ENCODE measurements at regions of chr5 and their contacts with region 1.

Region 1: DNA sequence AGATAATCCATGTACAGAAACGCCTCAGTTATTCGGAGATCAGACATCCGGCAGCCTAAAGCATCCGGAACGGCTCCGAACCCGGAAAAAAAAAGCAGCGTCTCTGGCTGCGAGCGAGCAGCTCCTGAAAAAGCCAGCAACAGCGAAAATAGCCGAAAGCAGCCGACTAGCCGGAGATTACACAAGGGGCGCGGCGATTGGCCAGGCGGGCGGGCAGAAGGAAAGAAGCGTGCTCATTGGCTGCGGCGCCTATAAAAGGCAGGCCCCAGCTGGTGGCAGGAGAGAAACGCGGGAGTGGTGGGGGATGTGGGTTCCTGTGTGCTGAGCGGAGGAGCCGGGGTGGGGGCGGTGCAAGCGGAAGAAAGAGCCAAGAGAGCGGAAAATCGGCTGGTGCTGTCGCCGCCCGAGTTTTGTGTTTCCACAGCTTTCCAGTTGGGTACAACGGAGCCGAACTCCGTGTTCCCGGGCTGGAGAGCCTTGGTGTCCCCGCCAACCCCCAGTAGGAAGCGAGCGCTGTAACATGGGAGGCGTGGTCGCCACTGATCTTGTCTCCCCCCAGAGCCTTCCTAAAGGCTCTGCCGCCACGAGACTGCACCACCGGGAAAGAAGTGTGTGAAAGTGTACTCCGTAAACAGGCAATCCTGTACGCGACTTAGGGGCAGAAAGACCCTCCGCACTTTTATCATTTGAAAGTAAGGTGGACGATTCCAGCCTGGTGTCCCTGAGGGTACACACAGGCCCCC is at the start of gene ARL15:
- DNase-seq: peak; percentile 95 to 99 (median 98)
- ATAC-seq: peak; percentile 96
- H3K4me3 ChIP-seq: peak within 1 kb of the TSS; percentile 96
- H3K4me3 Mint-ChIP-seq: peak within 1 kb of the TSS; percentile 85 to 98 (median 94)
- H3K27ac ChIP-seq: peak within 1 kb of the TSS; percentile 78
- H3K27ac Mint-ChIP-seq: peak within 1 kb of the TSS; percentile 84 to 98 (median 95)
- H3K4me1 ChIP-seq: peaks cover 0 to 7% of the 10 kb centered on the region in 2 donors
- H3K4me1 Mint-ChIP-seq: peaks cover 12 to 36% (median 27%) of the 10 kb centered on the region in 7 donors
- H3K27me3 ChIP-seq: no peaks in the 10 kb centered on the region
- H3K27me3 Mint-ChIP-seq: peaks cover 0 to 28% (median 5%) of the 10 kb centered on the region in 5 donors
- total RNA-seq, gene ARL15: 9.6 to 15.6 (median 13.6) TPM

Region 2: GRCh38 chr5:52469420-52469819 is 1841.2 kb before region 1 on chr5:
- CTCF ChIA-PET with region 1: no interaction called
- POLR2A ChIA-PET with region 1: no interaction called
- intact Hi-C with region 1: no loop called
- DNase-seq: peak in 7 of 9 donors; percentile 2 to 45 (median 28)
- ATAC-seq: peak; percentile 67
- H3K4me3 ChIP-seq: peak overlapping the region; percentile 28
- H3K4me3 Mint-ChIP-seq: peak overlapping the region; percentile 43 to 74 (median 68)
- H3K27ac ChIP-seq: no peak overlapping the region
- H3K27ac Mint-ChIP-seq: peak overlapping the region; percentile 65 to 88 (median 77)
- H3K4me1 ChIP-seq: peaks cover 0 to 6% of the 10 kb centered on the region in 2 donors
- H3K4me1 Mint-ChIP-seq: peaks cover 0 to 14% (median 4%) of the 10 kb centered on the region in 7 donors
- H3K27me3 ChIP-seq: no peaks in the 10 kb centered on the region
- H3K27me3 Mint-ChIP-seq: peaks cover 0 to 2% (median 0%) of the 10 kb centered on the region in 5 donors

Region 3: GRCh38 chr5:52799983-52800393 is 1510.6 kb before region 1 on chr5:
- CTCF ChIA-PET with region 1: no interaction called
- POLR2A ChIA-PET with region 1: no interaction called
- intact Hi-C with region 1: loop called in 1 of 2 experiments (anchors 10 kb)
- DNase-seq: peak; percentile 91 to 97 (median 94)
- ATAC-seq: peak; percentile 92
- H3K4me3 ChIP-seq: peak overlapping the region; percentile 88
- H3K4me3 Mint-ChIP-seq: peak overlapping the region; percentile 92 to 99 (median 98)
- H3K27ac ChIP-seq: peak overlapping the region; percentile 78
- H3K27ac Mint-ChIP-seq: peak overlapping the region; percentile 89 to 98 (median 95)
- H3K4me1 ChIP-seq: peaks cover 25 to 26% of the 10 kb centered on the region in 2 donors
- H3K4me1 Mint-ChIP-seq: peaks cover 36 to 86% (median 62%) of the 10 kb centered on the region in 7 donors
- H3K27me3 ChIP-seq: no peaks in the 10 kb centered on the region
- H3K27me3 Mint-ChIP-seq: peaks cover 0 to 6% (median 0%) of the 10 kb centered on the region in 5 donors

Region 4: DNA sequence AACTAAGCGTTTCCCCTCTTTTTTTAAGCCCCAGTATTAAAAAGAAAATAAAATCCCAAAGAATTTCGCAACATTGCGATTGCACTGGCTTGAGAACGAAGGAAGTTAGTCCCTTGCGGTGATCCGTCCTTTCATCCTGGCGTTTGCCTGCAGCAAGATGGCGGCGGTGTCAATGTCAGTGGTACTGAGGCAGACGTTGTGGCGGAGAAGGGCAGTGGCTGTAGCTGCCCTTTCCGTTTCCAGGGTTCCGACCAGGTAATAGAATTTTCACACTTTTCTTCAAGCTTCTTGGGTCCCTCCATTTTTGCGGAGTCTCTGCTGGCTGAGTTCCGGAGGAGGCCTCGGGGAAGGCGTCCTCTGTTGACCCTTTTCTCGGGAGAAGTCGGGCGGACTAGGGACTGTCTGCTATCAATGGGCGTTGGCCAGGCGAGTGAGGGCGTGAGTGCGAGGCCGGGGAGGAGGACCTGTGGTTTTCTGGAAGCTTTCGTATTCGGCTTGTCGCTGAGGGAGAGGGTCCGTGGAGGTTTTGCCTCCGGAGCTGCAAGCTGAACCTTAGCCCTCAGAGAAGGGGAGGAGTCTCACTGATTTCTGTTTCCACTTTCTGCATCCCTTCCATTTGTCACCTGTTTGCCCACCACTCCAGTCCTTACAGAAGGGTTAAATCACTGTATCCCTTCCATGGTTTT is 750.0 kb before region 1 on chr5 and contains the start of gene NDUFS4:
- CTCF ChIA-PET with region 1: no interaction called
- POLR2A ChIA-PET with region 1: no interaction called
- intact Hi-C with region 1: loop called (anchors 1 to 2 kb)
- DNase-seq: peak; percentile 44 to 76 (median 68)
- ATAC-seq: peak; percentile 94
- H3K4me3 ChIP-seq: peak within 1 kb of the TSS; percentile 54
- H3K4me3 Mint-ChIP-seq: peak within 1 kb of the TSS; percentile 97 to 100 (median 98)
- H3K27ac ChIP-seq: peak within 1 kb of the TSS; percentile 74
- H3K27ac Mint-ChIP-seq: peak within 1 kb of the TSS; percentile 91 to 99 (median 95)
- H3K4me1 ChIP-seq: peaks cover 0 to 18% of the 10 kb centered on the region in 2 donors
- H3K4me1 Mint-ChIP-seq: peaks cover 20 to 56% (median 50%) of the 10 kb centered on the region in 7 donors
- H3K27me3 ChIP-seq: no peaks in the 10 kb centered on the region
- H3K27me3 Mint-ChIP-seq: peaks cover 13 to 35% (median 28%) of the 10 kb centered on the region in 5 donors
- total RNA-seq, gene NDUFS4: 23.4 to 54.8 (median 35.6) TPM

Region 5: GRCh38 chr5:54480296-54480695 is 169.7 kb after region 1 on chr5:
- CTCF ChIA-PET with region 1: no interaction called
- POLR2A ChIA-PET with region 1: no interaction called
- intact Hi-C with region 1: loop called in 1 of 2 experiments (anchors 5 kb)
- DNase-seq: no peak
- ATAC-seq: peak; percentile 27
- H3K4me3 ChIP-seq: no peak overlapping the region
- H3K4me3 Mint-ChIP-seq: no peak overlapping the region
- H3K27ac ChIP-seq: no peak overlapping the region
- H3K27ac Mint-ChIP-seq: no peak overlapping the region
- H3K4me1 ChIP-seq: no peaks in the 10 kb centered on the region
- H3K4me1 Mint-ChIP-seq: peaks cover 0 to 3% (median 0%) of the 10 kb centered on the region in 7 donors
- H3K27me3 ChIP-seq: no peaks in the 10 kb centered on the region
- H3K27me3 Mint-ChIP-seq: peaks cover 5 to 19% (median 14%) of the 10 kb centered on the region in 5 donors

Region 6: DNA sequence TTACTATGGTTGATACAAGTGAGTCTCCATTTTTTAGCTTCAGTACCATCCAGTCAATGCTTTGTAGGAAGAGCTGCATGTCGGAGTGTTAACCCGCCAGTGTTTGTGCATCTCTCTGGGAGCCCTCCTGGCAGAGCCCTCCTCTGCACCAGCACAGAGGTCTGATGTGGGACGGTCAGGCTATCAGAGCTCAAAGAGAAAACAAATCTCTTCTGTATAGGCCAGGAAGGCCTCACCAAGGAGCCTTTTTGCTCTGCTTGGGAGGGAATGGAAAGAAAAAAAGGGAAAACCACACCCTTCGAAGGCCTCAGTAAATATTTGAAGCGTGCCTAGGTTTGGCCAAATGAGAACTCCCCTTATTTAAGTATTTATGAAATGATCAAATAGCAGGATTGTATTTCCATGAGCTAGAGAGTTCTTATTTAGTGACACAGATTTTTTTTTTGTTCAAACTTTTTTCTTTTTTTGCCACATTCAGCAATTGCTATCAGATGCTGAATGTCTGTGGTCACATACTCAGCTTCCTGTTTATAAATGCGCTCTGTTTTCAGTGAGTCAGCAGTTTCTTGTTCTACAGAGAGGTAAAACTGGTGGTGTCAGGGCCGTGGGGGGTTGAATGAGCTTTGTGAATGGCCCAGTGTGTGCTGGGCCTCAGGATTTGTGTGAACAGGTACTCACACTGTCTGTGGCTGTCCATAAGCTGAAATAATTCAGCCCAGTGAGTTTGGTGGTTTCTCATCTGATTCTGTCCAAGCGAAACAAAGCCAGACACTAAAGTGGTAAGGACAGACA is 433.6 kb after region 1 on chr5:
- CTCF ChIA-PET with region 1: no interaction called
- POLR2A ChIA-PET with region 1: no interaction called
- intact Hi-C with region 1: loop called in 1 of 2 experiments (anchors 5 kb)
- DNase-seq: peak in 8 of 9 donors; percentile 38 to 71 (median 52)
- ATAC-seq: peak; percentile 90
- H3K4me3 ChIP-seq: peak overlapping the region; percentile 9
- H3K4me3 Mint-ChIP-seq: peak overlapping the region in 9 of 10 donors; percentile 3 to 77 (median 35)
- H3K27ac ChIP-seq: no peak overlapping the region
- H3K27ac Mint-ChIP-seq: peak overlapping the region in 8 of 9 donors; percentile 25 to 82 (median 36)
- H3K4me1 ChIP-seq: peaks cover 11 to 35% of the 10 kb centered on the region in 2 donors
- H3K4me1 Mint-ChIP-seq: peaks cover 16 to 57% (median 20%) of the 10 kb centered on the region in 7 donors
- H3K27me3 ChIP-seq: no peaks in the 10 kb centered on the region
- H3K27me3 Mint-ChIP-seq: peaks cover 0 to 6% (median 4%) of the 10 kb centered on the region in 5 donors

Region 7: DNA sequence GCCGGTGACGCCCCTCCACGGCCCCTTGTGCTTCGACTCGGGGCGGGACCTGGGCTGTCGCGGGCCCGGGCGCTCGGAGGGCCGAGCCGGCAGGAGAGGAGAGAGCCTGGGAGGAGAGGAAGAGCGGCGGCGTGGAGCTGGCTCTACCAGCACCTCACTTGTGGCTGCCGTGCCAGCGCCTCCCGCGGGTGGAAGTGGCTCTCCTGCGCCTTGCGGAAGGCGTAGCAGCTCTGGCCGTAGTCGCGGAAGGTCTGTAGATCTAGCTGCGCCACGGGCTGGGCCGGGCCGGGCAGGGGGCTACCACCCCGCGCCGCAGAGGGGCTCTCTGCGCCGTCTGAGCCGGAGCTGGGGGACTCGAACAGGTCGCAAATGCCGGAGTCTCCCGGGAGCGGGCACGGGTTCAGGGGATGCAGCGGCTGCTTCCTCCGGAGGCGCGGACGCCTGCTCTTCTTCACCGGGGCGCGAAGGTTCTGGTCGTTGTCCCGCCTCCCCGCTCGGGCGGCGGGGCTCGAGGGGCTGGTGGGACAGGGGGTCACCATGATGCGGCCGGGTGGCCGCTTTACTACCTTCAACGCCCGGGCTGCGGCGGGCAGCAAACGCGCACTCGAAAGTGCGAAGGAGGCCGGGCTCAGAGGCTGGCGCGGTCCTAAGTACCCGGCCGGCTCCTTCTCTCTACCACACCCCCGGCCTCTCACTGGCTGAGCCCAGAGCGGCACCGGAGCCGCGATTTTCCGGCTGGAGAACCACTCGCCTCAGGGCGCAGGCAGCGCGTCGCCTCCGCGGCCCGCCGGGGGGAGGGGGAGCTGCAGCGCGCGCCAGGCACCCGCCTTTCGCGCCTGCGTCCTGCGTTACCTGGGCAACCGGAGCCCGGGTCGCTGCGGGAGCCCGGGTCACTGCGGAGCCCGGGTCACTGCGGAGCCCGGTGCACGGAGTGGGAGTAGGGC is 922.7 kb after region 1 on chr5 and contains the start of gene CCNO:
- CTCF ChIA-PET with region 1: no interaction called
- POLR2A ChIA-PET with region 1: no interaction called
- intact Hi-C with region 1: loop called in 1 of 2 experiments (anchors 5 kb)
- DNase-seq: peak in 8 of 9 donors; percentile 30 to 76 (median 50)
- ATAC-seq: peak; percentile 78
- H3K4me3 ChIP-seq: peak within 1 kb of the TSS; percentile 59
- H3K4me3 Mint-ChIP-seq: peak within 1 kb of the TSS; percentile 81 to 94 (median 86)
- H3K27ac ChIP-seq: no peak within 1 kb of the TSS
- H3K27ac Mint-ChIP-seq: peak within 1 kb of the TSS in 3 of 9 donors; percentile 25 to 41 (median 38)
- H3K4me1 ChIP-seq: peaks cover 22 to 27% of the 10 kb centered on the region in 2 donors
- H3K4me1 Mint-ChIP-seq: peaks cover 19 to 46% (median 29%) of the 10 kb centered on the region in 7 donors
- H3K27me3 ChIP-seq: peaks cover 9 to 35% of the 10 kb centered on the region in 2 donors
- H3K27me3 Mint-ChIP-seq: peaks cover 69 to 87% (median 76%) of the 10 kb centered on the region in 5 donors
- total RNA-seq, gene CCNO: not detected